GM10248 (cell line): ENCODE measurements at regions of chr1 and their contacts with region 1.

Region 1: DNA sequence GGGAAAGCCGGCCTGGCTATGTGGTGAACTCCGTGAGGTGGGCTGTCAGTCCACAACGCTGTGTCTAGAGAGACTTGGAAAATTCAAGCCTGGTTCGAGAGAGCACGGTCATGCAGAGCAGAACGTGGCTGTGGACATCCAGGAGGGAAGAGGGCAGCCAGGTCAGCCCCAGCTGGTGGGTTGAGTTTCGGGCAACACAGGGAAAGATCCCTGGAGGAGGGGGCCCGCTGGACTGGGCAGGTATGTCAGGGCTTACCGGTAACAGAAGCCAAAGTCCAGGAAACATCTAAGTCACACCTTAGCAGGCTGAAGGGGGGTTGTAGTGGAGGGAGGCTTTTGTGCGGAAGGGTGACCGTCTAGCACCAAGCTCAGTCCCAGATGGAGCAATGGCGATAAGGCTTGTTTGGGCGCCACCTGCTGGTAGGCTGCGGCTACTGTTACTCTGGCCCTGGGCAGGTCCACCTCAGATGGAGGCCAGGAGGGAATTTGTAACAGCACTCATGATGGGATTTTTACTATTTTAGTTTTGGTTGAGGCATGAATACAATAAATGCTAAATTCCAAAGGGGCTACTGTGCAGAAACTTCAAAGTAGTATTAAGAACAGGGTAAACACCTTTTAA is 143.3 kb upstream of the ZNF644 start:
- DNase-seq: peak; percentile 81
- CTCF ChIP-seq: peak; percentile 100

Region 2: GRCh38 chr1:90721210-90722194 is 443.6 kb before region 1 on chr1:
- CTCF ChIA-PET with region 1: interaction called, 56 read pairs
- POLR2A ChIA-PET with region 1: no interaction called
- DNase-seq: peak; percentile 67
- CTCF ChIP-seq: peak; percentile 80

Region 3: DNA sequence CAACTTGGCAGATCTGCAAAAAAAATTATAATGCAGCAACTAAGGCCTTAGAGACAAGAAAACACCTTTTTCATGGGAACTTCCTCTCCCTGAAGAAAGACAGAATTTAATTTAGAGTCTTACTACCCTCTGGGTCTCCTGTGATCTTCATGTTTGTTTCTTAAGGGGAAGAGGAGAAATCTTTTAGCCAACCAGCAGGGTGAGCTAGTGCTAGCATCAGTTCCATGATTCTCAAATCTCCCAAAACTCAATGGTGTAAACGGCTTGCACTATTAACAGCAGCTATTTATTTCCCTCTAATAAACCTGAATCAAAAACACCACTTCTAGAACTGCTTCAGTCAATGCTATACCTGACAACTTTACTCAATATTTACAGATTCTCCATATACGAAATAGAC is 147.1 kb before region 1 on chr1:
- CTCF ChIA-PET with region 1: interaction called, 10 read pairs
- POLR2A ChIA-PET with region 1: no interaction called
- DNase-seq: no peak
- CTCF ChIP-seq: peak; percentile 20

Region 4: GRCh38 chr1:91141858-91142257 is 23.3 kb before region 1 on chr1:
- CTCF ChIA-PET with region 1: interaction called, 19 read pairs
- POLR2A ChIA-PET with region 1: no interaction called
- DNase-seq: no peak
- CTCF ChIP-seq: no peak

Region 5: DNA sequence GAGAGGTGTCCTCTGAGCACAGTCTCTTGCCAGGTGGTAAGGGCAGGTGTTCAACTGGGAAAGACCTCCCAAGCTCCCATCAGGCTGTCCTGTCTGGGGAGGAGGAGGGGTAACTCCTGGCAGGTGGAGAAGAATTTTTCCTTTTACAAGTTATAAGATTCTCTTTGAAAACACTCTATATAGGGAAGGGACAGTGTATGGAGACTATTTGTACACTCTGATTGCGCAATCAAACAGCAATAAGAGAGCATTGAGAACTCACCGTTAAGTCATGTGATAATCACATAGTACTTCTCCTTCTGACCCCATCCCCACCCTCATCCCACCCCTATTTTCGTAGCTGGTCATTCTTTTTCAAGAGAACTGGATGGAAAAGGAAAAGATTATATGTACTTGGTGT is 36.0 kb after region 1 on chr1:
- CTCF ChIA-PET with region 1: interaction called, 11 read pairs
- POLR2A ChIA-PET with region 1: no interaction called
- DNase-seq: no peak
- CTCF ChIP-seq: no peak

Region 6: DNA sequence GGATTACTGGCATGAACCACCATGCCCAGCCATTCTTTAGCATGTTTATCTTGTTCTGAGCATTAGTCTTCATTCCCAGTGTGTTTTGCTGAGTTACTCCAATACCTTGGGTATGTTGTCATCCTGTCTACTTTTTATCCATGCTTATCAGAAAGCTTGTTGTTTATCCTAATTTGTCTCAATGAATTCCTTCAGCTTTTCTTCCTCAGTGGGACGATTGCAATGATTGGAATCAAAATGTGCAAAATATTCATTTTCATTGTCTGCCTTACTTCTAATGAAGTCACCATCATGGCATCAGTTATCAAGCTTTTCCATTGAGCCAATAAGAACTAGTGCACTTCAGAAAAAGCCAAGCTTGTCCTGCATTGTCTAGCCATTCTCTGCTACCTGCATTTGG is 69.0 kb after region 1 on chr1:
- CTCF ChIA-PET with region 1: no interaction called
- POLR2A ChIA-PET with region 1: no interaction called
- DNase-seq: no peak
- CTCF ChIP-seq: no peak

Region 7: GRCh38 chr1:91412371-91412770 is 247.2 kb after region 1 on chr1:
- CTCF ChIA-PET with region 1: no interaction called
- POLR2A ChIA-PET with region 1: no interaction called
- DNase-seq: no peak
- CTCF ChIP-seq: no peak